ENCODE measurements at regions of chr7 and their contacts with region 1.

Region 1: DNA sequence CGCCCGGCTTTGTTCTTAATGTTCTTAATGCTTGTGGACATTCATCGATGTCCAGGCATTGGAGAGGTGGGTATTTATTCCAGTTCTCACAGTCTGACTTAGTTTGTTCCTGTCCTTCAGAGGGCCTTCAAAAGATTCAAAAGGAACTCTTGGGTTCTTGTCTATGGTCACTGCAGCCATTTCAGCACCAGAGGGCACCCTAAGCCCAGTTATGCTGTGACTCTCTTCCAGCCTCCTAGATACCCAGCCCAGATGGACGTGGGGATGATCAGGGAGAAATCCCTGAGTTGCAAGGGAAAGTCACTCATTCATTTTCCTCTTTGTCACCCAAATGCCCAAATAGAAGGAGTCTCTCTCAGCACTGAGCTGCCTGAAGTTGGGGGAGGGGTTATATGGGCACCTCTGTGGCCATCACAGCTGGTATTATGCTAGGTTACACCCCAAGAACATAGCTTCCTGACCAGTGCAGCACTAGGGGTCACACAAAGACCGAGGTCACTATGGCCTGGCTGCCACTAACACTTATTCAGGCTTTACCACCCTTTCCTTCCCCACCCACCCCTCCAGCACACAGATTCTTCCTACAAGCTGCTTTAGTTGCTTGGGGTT is 26.5 kb upstream of the CCDC126 start:
- DNase-seq: peak; percentile 65
- ATAC-seq: peak; percentile 93 to 96
- H3K4me3 ChIP-seq: no peak overlapping the region
- H3K27ac ChIP-seq: no peak overlapping the region
- H3K4me1 ChIP-seq: no peaks in the 10 kb centered on the region
- H3K27me3 ChIP-seq: no peaks in the 10 kb centered on the region
- CTCF ChIP-seq: peak; percentile 88

Region 2: DNA sequence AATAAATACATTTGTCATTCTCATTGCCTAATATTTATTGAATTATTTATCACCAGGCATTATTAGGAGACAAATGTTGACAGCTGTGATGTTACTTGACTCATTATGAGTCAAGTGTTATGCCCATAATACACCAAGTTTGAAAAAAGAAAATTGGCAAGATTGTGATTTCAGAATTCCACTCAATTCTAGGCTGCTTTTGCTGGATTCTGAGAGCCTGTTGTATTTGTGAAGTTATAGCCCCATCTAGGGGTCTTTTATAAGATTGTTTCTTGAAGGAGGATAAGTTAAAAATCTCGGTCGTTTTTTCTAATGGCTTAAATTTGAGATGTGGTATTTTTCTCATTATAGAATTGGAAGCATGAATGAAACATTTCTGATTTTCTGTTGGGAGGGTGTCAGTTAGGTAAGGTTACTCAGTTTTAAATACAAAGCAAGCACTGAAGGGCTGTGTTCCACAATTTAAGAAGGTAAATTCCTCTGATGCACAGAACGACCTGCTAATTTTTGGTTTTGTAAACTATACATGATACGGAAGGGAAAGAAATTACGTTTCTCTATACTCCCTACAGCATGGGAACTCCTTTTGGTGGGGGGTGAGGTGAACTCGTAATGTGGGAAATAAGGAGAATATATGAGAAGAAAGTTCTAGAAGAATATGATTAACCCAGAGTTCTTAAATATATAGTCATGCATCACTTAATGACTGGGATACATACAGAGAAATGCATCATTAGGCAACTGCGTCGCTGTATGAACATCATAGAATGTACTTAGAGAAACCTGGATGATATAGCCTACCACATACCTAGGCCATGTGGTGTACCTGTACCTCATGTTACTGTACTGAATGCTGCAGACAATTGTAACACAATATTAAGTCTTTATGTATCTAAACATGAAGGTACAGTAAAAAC is 141.9 kb after region 1 on chr7:
- intact Hi-C with region 1: loop called (anchors 5 kb)
- DNase-seq: no peak
- ATAC-seq: peak; percentile 56 to 76
- H3K4me3 ChIP-seq: no peak overlapping the region
- H3K27ac ChIP-seq: no peak overlapping the region
- H3K4me1 ChIP-seq: no peaks in the 10 kb centered on the region
- H3K27me3 ChIP-seq: no peaks in the 10 kb centered on the region
- CTCF ChIP-seq: peak; percentile 66

Measured in lower lobe of right lung (tissue), 2 donors.